ENCODE measurements at regions of chr9 and their contacts with region 1.

Region 1: GRCh38 chr9:126500684-126501382 is 112.9 kb upstream of the LMX1B start:
- DNase-seq: peak; percentile 92
- ATAC-seq: peak; percentile 78
- H3K4me3 Mint-ChIP-seq: peak overlapping the region; percentile 77
- H3K27ac Mint-ChIP-seq: no peak overlapping the region
- H3K4me1 Mint-ChIP-seq: peaks cover 13% of the 10 kb centered on the region
- H3K27me3 Mint-ChIP-seq: peaks cover 12% of the 10 kb centered on the region
- CTCF ChIP-seq: peak; percentile 97

Region 2: DNA sequence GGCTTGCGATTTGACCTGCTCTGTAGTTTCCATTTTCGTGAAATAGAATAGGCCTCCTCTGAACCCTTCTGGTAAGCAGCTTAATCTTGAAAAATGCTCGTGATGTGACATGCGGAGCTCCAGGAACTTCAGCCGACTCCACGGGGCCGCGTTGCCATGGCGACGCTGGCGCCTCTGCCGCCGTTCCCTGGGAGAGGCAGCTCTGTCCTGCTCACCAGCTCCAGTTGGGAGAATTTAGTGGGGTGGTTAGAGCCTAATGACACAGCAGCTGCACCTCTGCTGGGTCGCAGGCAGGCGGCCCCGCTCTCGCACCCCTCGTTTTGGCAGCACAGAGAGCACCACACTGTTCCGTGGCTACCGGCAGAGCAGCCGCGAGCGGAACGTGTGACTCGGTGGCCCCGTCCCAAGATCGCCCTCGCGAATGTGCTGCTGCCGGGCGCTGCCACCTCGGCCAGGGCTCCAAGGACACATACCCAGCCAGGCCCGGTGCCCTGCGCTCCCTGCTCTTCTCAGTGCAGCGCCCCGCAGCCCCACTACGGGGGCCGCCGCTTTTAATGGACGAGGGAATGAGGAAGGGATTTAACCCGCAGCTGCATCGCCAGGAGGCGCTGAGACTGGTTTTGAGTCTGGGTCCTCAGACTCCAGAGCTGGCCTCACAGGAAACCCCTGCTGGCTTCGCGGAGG is 18.3 kb before region 1 on chr9:
- CTCF ChIA-PET with region 1: interaction called, 58 read pairs
- POLR2A ChIA-PET with region 1: no interaction called
- DNase-seq: peak; percentile 64
- ATAC-seq: peak; percentile 79
- H3K4me3 Mint-ChIP-seq: peak overlapping the region; percentile 60
- H3K27ac Mint-ChIP-seq: no peak overlapping the region
- H3K4me1 Mint-ChIP-seq: no peaks in the 10 kb centered on the region; the same call in 1 of the 2 replicates
- H3K27me3 Mint-ChIP-seq: no peaks in the 10 kb centered on the region; the same call in 1 of the 2 replicates
- CTCF ChIP-seq: no peak

Region 3: DNA sequence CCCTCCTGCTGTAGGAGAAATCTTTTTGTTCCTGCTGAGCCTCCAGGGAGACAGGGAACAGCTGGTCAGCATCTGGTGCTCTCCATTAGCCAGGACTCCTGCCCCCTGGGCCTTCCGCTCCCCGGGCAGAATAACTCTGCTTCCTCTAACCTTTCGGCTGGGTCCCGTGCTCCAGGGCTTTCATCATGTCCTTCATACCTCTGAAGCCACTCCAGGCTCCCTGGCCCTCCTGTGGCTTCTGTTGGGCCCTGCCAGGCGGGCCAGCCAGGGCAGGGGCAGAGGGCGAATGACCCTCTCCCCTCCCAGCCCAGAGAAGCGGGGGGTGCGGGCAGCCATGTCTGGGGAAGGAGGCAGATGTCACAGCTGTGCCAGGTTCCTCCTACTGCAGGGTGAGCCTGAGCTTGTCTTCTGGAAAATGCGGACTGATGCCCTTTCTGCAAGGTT is 31.2 kb after region 1 on chr9:
- CTCF ChIA-PET with region 1: interaction called, 24 read pairs
- POLR2A ChIA-PET with region 1: no interaction called
- DNase-seq: no peak
- ATAC-seq: no peak
- H3K4me3 Mint-ChIP-seq: no peak overlapping the region
- H3K27ac Mint-ChIP-seq: no peak overlapping the region
- H3K4me1 Mint-ChIP-seq: peaks cover 74% of the 10 kb centered on the region
- H3K27me3 Mint-ChIP-seq: peaks cover 9% of the 10 kb centered on the region
- CTCF ChIP-seq: no peak

Region 4: GRCh38 chr9:126564711-126565110 is 63.9 kb after region 1 on chr9:
- CTCF ChIA-PET with region 1: interaction called, 48 read pairs
- POLR2A ChIA-PET with region 1: no interaction called
- DNase-seq: peak; percentile 61
- ATAC-seq: peak; percentile 88
- H3K4me3 Mint-ChIP-seq: no peak overlapping the region
- H3K27ac Mint-ChIP-seq: no peak overlapping the region
- H3K4me1 Mint-ChIP-seq: no peaks in the 10 kb centered on the region
- H3K27me3 Mint-ChIP-seq: no peaks in the 10 kb centered on the region; the same call in 1 of the 2 replicates
- CTCF ChIP-seq: peak; percentile 37; the same call in 1 of the 2 replicates

Region 5: GRCh38 chr9:126604059-126605055 is 103.5 kb after region 1 on chr9:
- CTCF ChIA-PET with region 1: interaction called, 17 read pairs
- POLR2A ChIA-PET with region 1: no interaction called
- DNase-seq: no peak
- ATAC-seq: no peak
- H3K4me3 Mint-ChIP-seq: no peak overlapping the region
- H3K27ac Mint-ChIP-seq: 0 out of 2 replicates have a peak overlapping the region, but pooled peaks have one; percentile 6
- H3K4me1 Mint-ChIP-seq: no peaks in the 10 kb centered on the region
- H3K27me3 Mint-ChIP-seq: peaks cover 39% of the 10 kb centered on the region
- CTCF ChIP-seq: no peak